WTC11 (cell line): ENCODE measurements at regions of chr4 and their contacts with region 1.

Region 1: DNA sequence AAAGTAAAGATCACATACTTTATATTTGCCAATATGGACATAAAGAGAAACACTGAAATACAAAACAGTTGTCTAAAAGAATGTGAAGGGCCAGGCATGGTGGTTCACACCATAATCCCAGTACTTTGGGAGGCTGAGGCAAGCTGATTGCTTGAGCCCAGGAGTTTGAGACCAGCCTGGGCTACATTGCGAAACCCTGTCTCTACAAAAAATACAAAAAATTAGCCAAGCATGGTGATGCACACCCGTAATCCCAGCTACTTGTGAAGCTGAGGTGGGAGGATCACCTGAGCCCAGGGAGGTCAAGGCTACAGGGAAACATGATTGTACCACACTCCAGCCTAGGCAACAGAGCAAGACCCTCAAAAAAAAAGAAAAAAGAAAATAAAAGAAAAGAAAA is 11.8 kb downstream of the RBM47 start:
- DNase-seq: no peak
- ATAC-seq: no peak
- H3K4me3 Mint-ChIP-seq: no peak overlapping the region
- H3K27ac Mint-ChIP-seq: peak overlapping the region; percentile 79
- H3K4me1 Mint-ChIP-seq: peaks cover 53% of the 10 kb centered on the region
- H3K27me3 Mint-ChIP-seq: no peaks in the 10 kb centered on the region
- CTCF ChIP-seq: no peak

Region 2: GRCh38 chr4:40455340-40455902 is 162.5 kb before region 1 on chr4:
- CTCF ChIA-PET with region 1: no interaction called
- POLR2A ChIA-PET with region 1: no interaction called
- DNase-seq: no peak
- ATAC-seq: no peak
- H3K4me3 Mint-ChIP-seq: no peak overlapping the region
- H3K27ac Mint-ChIP-seq: 0 out of 2 replicates have a peak overlapping the region, but pooled peaks have one; percentile 23
- H3K4me1 Mint-ChIP-seq: peaks cover 44% of the 10 kb centered on the region
- H3K27me3 Mint-ChIP-seq: no peaks in the 10 kb centered on the region
- CTCF ChIP-seq: no peak

Region 3: DNA sequence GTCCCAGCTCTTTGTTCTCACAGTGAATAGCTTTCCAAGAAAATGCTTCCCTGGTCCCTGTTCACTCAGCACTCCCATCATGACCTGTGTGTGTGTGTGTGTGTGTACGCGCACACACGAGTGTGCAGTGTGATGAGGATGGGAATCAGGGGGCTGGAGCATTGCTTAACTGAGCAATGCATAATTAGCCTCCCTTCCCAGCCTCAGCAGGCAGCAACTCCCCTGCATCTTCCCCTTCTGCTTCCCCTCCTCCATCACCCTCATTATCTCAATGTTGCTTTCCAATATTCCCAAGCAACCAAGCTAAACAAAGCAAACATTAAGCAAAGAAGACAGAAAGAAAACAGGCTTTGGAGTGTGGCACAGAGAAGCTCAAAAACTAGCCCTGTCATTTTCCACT is 125.2 kb before region 1 on chr4:
- CTCF ChIA-PET with region 1: no interaction called
- POLR2A ChIA-PET with region 1: no interaction called
- DNase-seq: no peak
- ATAC-seq: no peak
- H3K4me3 Mint-ChIP-seq: no peak overlapping the region
- H3K27ac Mint-ChIP-seq: peak overlapping the region; percentile 81
- H3K4me1 Mint-ChIP-seq: peaks cover 27% of the 10 kb centered on the region
- H3K27me3 Mint-ChIP-seq: no peaks in the 10 kb centered on the region
- CTCF ChIP-seq: no peak

Region 4: DNA sequence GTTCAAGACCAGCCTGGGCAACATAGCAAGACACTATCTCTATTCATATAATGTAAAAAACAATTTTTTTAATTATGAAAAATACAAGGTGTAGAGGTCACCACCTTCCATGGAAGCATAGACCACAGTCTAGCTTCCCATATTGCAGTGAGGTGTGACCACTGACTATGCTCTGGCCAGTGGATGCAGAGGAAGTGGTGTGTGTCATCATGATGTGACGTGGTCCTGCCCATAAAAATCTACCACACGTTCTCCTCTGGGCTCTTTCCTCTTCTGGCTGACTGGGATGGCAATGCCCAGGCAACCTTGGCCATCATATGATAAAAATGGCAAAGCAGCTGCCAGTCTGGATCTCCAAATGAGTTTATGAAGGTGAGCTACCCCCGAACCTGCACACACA is 53.9 kb before region 1 on chr4:
- CTCF ChIA-PET with region 1: no interaction called
- POLR2A ChIA-PET with region 1: no interaction called
- DNase-seq: no peak
- ATAC-seq: no peak
- H3K4me3 Mint-ChIP-seq: no peak overlapping the region
- H3K27ac Mint-ChIP-seq: peak overlapping the region; percentile 67
- H3K4me1 Mint-ChIP-seq: peaks cover 65% of the 10 kb centered on the region
- H3K27me3 Mint-ChIP-seq: no peaks in the 10 kb centered on the region
- CTCF ChIP-seq: no peak

Region 5: DNA sequence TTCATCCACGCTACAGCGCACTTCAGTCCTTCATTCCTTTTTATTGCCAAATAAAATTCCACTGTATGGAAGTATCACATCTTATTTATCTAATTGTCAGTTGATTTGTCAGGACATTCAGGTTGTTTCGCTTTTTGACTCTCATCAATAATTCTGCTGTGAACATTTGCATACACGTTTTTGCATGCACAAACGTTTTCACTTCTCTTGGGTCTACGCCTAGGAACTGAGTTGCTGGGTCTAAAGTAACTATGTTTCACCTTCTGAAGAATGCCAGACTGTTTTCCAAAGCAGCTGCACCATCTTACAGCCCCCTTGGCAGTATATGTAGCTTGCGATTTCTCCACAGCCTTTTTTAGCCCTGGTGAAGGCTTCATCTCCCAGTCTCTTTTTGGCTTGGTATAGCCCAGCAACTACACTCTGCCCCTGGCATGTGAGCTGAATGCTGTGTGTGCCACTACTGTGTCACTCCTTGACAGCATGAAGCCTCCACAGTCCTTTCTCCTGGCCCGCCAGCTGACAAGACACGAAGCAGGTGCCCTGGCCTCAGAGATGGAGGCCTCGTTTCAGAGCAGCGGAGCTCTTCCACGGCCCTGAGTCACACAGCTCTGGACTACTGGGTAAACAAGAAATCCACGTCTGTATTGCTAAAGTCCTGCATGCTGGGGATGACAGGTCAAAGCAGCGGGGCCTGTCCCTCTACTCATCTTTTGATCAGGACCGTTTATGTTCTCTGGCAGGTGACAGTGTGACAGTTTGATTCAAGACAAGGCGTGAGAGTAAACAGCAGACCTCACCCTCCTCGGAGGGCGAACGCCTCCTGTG is 207.4 kb after region 1 on chr4:
- CTCF ChIA-PET with region 1: no interaction called
- POLR2A ChIA-PET with region 1: no interaction called
- DNase-seq: no peak
- ATAC-seq: no peak
- H3K4me3 Mint-ChIP-seq: no peak overlapping the region
- H3K27ac Mint-ChIP-seq: no peak overlapping the region
- H3K4me1 Mint-ChIP-seq: no peaks in the 10 kb centered on the region
- H3K27me3 Mint-ChIP-seq: no peaks in the 10 kb centered on the region
- CTCF ChIP-seq: no peak

Region 6: GRCh38 chr4:41120297-41121217 is 502.7 kb after region 1 on chr4:
- CTCF ChIA-PET with region 1: no interaction called
- POLR2A ChIA-PET with region 1: interaction called, 10 read pairs
- DNase-seq: no peak
- ATAC-seq: no peak
- H3K4me3 Mint-ChIP-seq: no peak overlapping the region
- H3K27ac Mint-ChIP-seq: 0 out of 2 replicates have a peak overlapping the region, but pooled peaks have one; percentile 41
- H3K4me1 Mint-ChIP-seq: peaks cover 43% of the 10 kb centered on the region
- H3K27me3 Mint-ChIP-seq: no peaks in the 10 kb centered on the region
- CTCF ChIP-seq: no peak